Naive thymus-derived CD4-positive, alpha-beta T cell (primary cell): ENCODE measurements at regions of chr6 and their contacts with region 1.

Region 1: GRCh38 chr6:130132286-130132701 is 90.5 kb downstream of the SAMD3 start:
- DNase-seq: peak in 8 of 9 donors; percentile 32 to 92 (median 84)
- ATAC-seq: peak; percentile 92
- H3K4me3 ChIP-seq: peak overlapping the region; percentile 21
- H3K4me3 Mint-ChIP-seq: peak overlapping the region; percentile 51 to 81 (median 70)
- H3K27ac ChIP-seq: peak overlapping the region; percentile 71
- H3K27ac Mint-ChIP-seq: peak overlapping the region; percentile 85 to 98 (median 93)
- H3K4me1 ChIP-seq: peaks cover 43 to 61% of the 10 kb centered on the region in 2 donors
- H3K4me1 Mint-ChIP-seq: peaks cover 59 to 100% (median 93%) of the 10 kb centered on the region in 7 donors
- H3K27me3 ChIP-seq: no peaks in the 10 kb centered on the region
- H3K27me3 Mint-ChIP-seq: no peaks in the 10 kb centered on the region

Region 2: DNA sequence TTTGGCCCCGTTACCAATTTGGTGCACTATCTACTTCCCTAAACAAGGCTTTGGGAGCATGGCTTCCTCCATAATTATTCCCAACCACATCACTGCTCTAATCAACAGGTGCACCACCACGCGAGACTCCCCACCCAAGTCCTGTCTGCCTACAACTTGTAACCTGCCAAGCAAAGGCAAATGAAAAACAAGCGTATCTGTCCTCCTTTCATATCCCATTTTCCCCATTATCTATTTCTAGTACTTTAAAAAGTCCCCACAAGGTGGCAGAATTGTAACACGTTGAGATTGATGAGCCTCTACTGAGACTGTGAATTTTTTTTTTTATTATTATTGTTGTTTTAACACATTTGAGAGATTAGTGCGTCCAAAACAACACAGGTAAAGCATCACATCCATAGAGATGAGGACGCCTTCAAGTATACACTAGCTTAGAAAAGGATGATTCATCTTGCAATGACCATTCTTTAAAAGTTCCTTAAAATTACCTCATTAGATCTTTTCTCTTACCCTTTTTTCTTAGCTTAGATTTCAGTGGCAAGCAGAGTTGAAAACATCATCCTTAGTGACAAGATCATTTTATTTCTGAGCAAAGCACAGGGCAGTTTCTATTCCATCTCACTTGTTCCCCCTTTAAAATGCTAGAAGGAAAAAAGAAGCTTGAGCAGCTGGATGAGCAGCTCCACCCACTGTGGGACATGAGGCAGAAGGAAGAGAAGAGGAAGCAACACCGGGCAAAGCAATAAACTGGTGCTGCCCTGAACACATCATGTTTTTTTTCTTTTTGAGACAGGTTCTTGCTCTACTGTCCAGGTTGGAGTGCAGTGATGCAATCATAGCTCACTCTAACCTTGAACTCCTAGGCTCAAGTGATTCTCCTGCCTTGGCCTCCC is 633.1 kb before region 1 on chr6:
- CTCF ChIA-PET with region 1: no interaction called
- POLR2A ChIA-PET with region 1: no interaction called
- intact Hi-C with region 1: no loop called
- DNase-seq: peak in 7 of 9 donors; percentile 25 to 60 (median 52)
- ATAC-seq: peak; percentile 82
- H3K4me3 ChIP-seq: peak overlapping the region; percentile 37
- H3K4me3 Mint-ChIP-seq: peak overlapping the region; percentile 23 to 81 (median 64)
- H3K27ac ChIP-seq: no peak overlapping the region
- H3K27ac Mint-ChIP-seq: peak overlapping the region in 7 of 9 donors; percentile 0 to 62 (median 2)
- H3K4me1 ChIP-seq: peaks cover 0 to 5% of the 10 kb centered on the region in 2 donors
- H3K4me1 Mint-ChIP-seq: peaks cover 9 to 43% (median 18%) of the 10 kb centered on the region in 7 donors
- H3K27me3 ChIP-seq: no peaks in the 10 kb centered on the region
- H3K27me3 Mint-ChIP-seq: no peaks in the 10 kb centered on the region

Region 3: GRCh38 chr6:130076512-130076911 is 55.8 kb before region 1 on chr6:
- CTCF ChIA-PET with region 1: interaction called, 4 read pairs
- POLR2A ChIA-PET with region 1: no interaction called
- intact Hi-C with region 1: loop called (anchors 2 to 5 kb)
- DNase-seq: peak in 5 of 9 donors; percentile 7 to 36 (median 27)
- ATAC-seq: no peak
- H3K4me3 ChIP-seq: no peak overlapping the region
- H3K4me3 Mint-ChIP-seq: peak overlapping the region in 1 of 10 donors; percentile 37
- H3K27ac ChIP-seq: no peak overlapping the region
- H3K27ac Mint-ChIP-seq: no peak overlapping the region
- H3K4me1 ChIP-seq: no peaks in the 10 kb centered on the region
- H3K4me1 Mint-ChIP-seq: peaks cover 12 to 31% (median 23%) of the 10 kb centered on the region in 7 donors
- H3K27me3 ChIP-seq: no peaks in the 10 kb centered on the region
- H3K27me3 Mint-ChIP-seq: no peaks in the 10 kb centered on the region

Region 4: GRCh38 chr6:130189531-130190397 is 57.5 kb after region 1 on chr6:
- CTCF ChIA-PET with region 1: interaction called, 3 read pairs
- POLR2A ChIA-PET with region 1: interaction called, 4 read pairs
- intact Hi-C with region 1: loop called (anchors 1 to 2 kb)
- DNase-seq: peak in 4 of 9 donors; percentile 11 to 14 (median 13)
- ATAC-seq: no peak
- H3K4me3 ChIP-seq: peak overlapping the region; percentile 10
- H3K4me3 Mint-ChIP-seq: peak overlapping the region in 8 of 10 donors; percentile 14 to 75 (median 58)
- H3K27ac ChIP-seq: peak overlapping the region; percentile 46
- H3K27ac Mint-ChIP-seq: peak overlapping the region in 8 of 9 donors; percentile 66 to 95 (median 84)
- H3K4me1 ChIP-seq: peaks cover 35 to 39% of the 10 kb centered on the region in 2 donors
- H3K4me1 Mint-ChIP-seq: peaks cover 47 to 98% (median 91%) of the 10 kb centered on the region in 7 donors
- H3K27me3 ChIP-seq: no peaks in the 10 kb centered on the region
- H3K27me3 Mint-ChIP-seq: no peaks in the 10 kb centered on the region

Region 5: GRCh38 chr6:130365166-130366106 is 233.1 kb after region 1 on chr6 and contains the start of gene TMEM200A:
- CTCF ChIA-PET with region 1: no interaction called
- POLR2A ChIA-PET with region 1: no interaction called
- intact Hi-C with region 1: loop called in 1 of 2 experiments (anchors 5 kb)
- DNase-seq: peak in 6 of 9 donors; percentile 7 to 63 (median 21)
- ATAC-seq: peak; percentile 64
- H3K4me3 ChIP-seq: peak within 1 kb of the TSS; percentile 68
- H3K4me3 Mint-ChIP-seq: peak within 1 kb of the TSS; percentile 66 to 90 (median 83)
- H3K27ac ChIP-seq: no peak within 1 kb of the TSS
- H3K27ac Mint-ChIP-seq: peak within 1 kb of the TSS in 2 of 9 donors; percentile 55 to 64
- H3K4me1 ChIP-seq: peaks cover 4 to 5% of the 10 kb centered on the region in 2 donors
- H3K4me1 Mint-ChIP-seq: peaks cover 7 to 26% (median 17%) of the 10 kb centered on the region in 7 donors
- H3K27me3 ChIP-seq: no peaks in the 10 kb centered on the region
- H3K27me3 Mint-ChIP-seq: peaks cover 7 to 64% (median 38%) of the 10 kb centered on the region in 5 donors
- total RNA-seq, gene TMEM200A: 0.19 to 7.2 (median 0.99) TPM in 4 of 5 experiments, not detected in the other

Region 6: DNA sequence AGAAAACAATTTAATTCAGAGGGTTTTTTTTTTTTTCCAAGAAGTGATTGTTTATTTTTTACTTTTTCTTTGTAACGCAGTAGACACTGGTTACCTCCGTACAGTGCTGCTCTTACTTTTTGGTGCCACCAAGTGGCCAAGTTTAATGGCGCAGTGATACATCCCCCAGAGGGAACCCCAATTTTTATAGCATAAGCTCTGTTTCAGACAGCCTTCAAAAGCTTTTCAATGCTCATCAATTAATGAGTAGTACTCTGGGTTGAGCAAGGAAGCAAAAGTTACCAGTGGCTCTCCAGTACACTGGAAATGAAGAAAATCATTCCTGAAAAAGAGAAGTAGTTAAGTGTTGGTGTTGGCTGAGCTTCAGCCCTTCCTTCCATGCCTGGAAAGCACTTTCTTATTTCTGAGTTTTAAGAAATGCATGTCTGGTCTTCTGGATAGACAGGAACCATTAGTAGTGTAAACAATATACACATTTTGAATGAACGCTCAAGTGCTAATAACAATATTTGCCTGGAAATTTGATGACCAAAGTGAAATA is 565.8 kb after region 1 on chr6:
- CTCF ChIA-PET with region 1: no interaction called
- POLR2A ChIA-PET with region 1: no interaction called
- intact Hi-C with region 1: loop called in 1 of 2 experiments (anchors 5 kb)
- DNase-seq: peak in 7 of 9 donors; percentile 16 to 60 (median 58)
- ATAC-seq: peak; percentile 81
- H3K4me3 ChIP-seq: no peak overlapping the region
- H3K4me3 Mint-ChIP-seq: peak overlapping the region in 5 of 10 donors; percentile 24 to 57 (median 41)
- H3K27ac ChIP-seq: no peak overlapping the region
- H3K27ac Mint-ChIP-seq: peak overlapping the region in 1 of 9 donors; percentile 70
- H3K4me1 ChIP-seq: peaks cover 6 to 13% of the 10 kb centered on the region in 2 donors
- H3K4me1 Mint-ChIP-seq: peaks cover 11 to 63% (median 40%) of the 10 kb centered on the region in 7 donors
- H3K27me3 ChIP-seq: no peaks in the 10 kb centered on the region
- H3K27me3 Mint-ChIP-seq: peaks cover 0 to 5% (median 4%) of the 10 kb centered on the region in 5 donors

Region 7: DNA sequence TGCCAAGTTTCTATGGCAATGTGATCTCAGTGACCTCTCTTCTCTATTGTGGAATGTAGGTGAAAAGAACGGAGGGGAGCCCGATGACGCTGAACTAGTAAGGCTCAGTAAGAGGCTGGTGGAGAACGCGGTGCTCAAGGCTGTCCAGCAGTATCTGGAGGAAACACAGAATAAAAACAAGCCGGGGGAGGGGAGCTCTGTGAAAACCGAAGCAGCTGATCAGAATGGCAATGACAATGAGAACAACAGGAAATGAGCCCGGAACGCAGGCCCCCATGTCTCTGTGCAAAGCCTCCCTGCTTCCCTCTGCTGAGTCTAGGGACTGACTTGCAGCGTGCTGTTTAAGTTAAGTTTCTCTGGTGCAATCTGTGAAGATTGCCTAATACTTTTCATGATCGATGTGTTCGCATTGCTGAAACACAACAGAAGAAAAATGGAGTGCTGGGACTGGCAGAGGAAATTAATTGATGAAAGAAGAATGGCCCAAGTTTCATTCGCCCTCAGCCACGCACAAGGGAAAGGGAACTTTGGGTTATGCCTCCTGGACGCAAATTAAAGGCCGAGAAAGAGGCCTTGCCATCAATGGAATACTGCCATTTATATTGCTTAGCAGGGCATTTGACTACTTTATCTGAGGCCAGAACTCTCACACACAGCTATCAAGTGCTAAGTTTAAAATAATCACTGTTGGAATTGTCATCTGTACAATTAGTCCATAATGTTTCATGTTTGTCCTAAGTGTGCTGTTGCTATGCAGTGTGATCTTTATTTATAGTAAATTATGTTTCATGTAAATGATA is 1149.4 kb after region 1 on chr6:
- CTCF ChIA-PET with region 1: no interaction called
- POLR2A ChIA-PET with region 1: no interaction called
- intact Hi-C with region 1: loop called in 1 of 2 experiments (anchors 5 kb)
- DNase-seq: peak; percentile 24 to 89 (median 83)
- ATAC-seq: peak; percentile 95
- H3K4me3 ChIP-seq: peak overlapping the region; percentile 28
- H3K4me3 Mint-ChIP-seq: peak overlapping the region; percentile 75 to 91 (median 83)
- H3K27ac ChIP-seq: peak overlapping the region; percentile 80
- H3K27ac Mint-ChIP-seq: peak overlapping the region; percentile 96 to 99 (median 98)
- H3K4me1 ChIP-seq: peaks cover 17 to 49% of the 10 kb centered on the region in 2 donors
- H3K4me1 Mint-ChIP-seq: peaks cover 22 to 93% (median 82%) of the 10 kb centered on the region in 7 donors
- H3K27me3 ChIP-seq: no peaks in the 10 kb centered on the region
- H3K27me3 Mint-ChIP-seq: no peaks in the 10 kb centered on the region